ENCODE measurements at regions of chr7 and their contacts with region 1.

Region 1: GRCh38 chr7:52260046-52260665 is 775.3 kb upstream of the POM121L12 start:
- DNase-seq: peak; percentile 68 to 85
- H3K4me3 ChIP-seq: no peak overlapping the region
- H3K4me1 ChIP-seq: peaks cover 4% of the 10 kb centered on the region
- H3K27me3 ChIP-seq: no peaks in the 10 kb centered on the region

Region 2: DNA sequence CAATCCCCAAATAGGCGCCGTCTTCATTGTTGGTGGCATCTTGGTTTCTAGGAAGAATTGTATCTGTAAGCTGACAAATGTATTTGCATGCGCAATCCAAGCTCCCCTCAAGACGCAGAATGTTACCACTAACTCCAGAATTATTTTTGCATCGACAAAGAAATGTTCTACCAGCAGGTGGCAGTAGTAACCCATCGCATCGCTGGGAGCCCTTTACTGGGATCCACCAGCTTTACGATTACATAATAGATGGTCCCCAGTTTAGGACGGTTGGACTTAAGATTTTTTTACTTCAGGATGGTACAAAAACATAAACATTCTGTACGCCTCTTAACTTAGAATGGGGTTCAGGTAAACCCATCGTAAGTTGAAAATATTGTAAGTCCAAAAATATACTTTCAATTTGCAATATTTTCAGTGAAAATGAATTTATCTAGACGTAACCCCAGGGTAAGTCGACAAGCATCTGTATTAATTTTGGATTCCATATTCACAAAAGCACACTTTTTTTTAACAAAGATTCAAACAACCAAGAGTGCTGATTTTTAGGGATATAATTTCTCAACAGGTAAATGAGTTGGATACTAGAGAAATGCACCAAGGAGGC is 829.6 kb before region 1 on chr7:
- in situ Hi-C with region 1: loop called (anchors 25 kb)
- DNase-seq: peak; percentile 65 to 81
- H3K4me3 ChIP-seq: no peak overlapping the region
- H3K4me1 ChIP-seq: no peaks in the 10 kb centered on the region
- H3K27me3 ChIP-seq: no peaks in the 10 kb centered on the region

Region 3: GRCh38 chr7:52017802-52018679 is 242.1 kb before region 1 on chr7:
- in situ Hi-C with region 1: loop called (anchors 10 kb)
- DNase-seq: peak; percentile 86 to 98
- H3K4me3 ChIP-seq: peak overlapping the region; percentile 10
- H3K4me1 ChIP-seq: peaks cover 25% of the 10 kb centered on the region
- H3K27me3 ChIP-seq: no peaks in the 10 kb centered on the region